GM12878 (cell line): ENCODE measurements at regions of chr20 and their contacts with region 1.

Region 1: DNA sequence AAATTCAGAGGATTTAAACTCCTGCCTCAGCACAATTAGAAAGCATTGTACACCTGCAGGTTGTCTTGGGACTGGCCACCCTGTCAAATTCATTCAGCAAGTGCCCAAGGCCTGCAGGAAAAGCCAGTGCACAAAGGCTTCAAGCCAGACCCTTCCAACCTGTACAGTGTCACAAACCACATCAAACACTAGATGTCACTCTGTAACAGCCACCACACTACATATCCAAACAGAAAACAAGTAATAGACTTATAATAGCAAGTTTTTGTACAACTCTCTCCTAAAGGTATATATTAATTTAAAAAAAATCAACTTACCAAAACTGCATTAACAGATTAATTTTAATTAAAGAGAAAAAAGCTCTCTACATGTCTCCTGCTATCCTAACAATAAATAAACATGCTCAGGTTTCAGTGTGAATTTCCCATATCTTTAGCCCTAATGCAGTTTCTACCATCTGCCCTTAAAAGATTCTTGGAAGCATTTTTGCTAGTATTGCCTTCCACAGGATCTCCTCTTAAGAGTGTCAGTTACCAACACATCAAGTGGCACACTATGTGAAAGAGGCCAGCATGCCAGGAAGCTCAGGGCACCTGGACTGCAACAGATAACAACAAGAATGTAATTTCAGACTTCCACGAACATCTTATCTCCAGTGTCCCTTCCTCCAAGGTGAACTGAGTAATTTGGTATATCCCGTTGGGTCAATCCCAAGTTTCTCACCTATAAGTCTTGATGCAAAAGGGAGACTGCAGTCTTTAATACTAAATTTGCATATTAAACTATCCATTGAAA is 47.5 kb downstream of the RALGAPA2 start:
- DNase-seq: no peak
- ATAC-seq: peak; percentile 81
- H3K4me3 ChIP-seq: no peak overlapping the region
- H3K27ac ChIP-seq: no peak overlapping the region
- H3K4me1 ChIP-seq: peaks cover 17% of the 10 kb centered on the region
- H3K27me3 ChIP-seq: no peaks in the 10 kb centered on the region
- CTCF ChIP-seq: peak; percentile 38 to 70 (median 66); a peak in 5 of 6 replicates
- EP300 ChIP-seq: no peak
- POLR2A ChIP-seq: no peak
- RAD21 ChIP-seq: peak; percentile 92

Region 2: GRCh38 chr20:20549718-20550117 is 115.3 kb before region 1 on chr20:
- CTCF ChIA-PET with region 1: no interaction called
- POLR2A ChIA-PET with region 1: no interaction called
- RAD21 ChIA-PET with region 1: no interaction called
- SMC1A ChIA-PET with region 1: no interaction called
- in situ Hi-C with region 1: no loop called
- intact Hi-C with region 1: no loop called
- DNase-seq: no peak
- ATAC-seq: no peak
- H3K4me3 ChIP-seq: no peak overlapping the region
- H3K27ac ChIP-seq: no peak overlapping the region
- H3K4me1 ChIP-seq: peaks cover 4% of the 10 kb centered on the region
- H3K27me3 ChIP-seq: no peaks in the 10 kb centered on the region
- CTCF ChIP-seq: no peak
- EP300 ChIP-seq: no peak
- POLR2A ChIP-seq: no peak
- RAD21 ChIP-seq: no peak

Region 3: GRCh38 chr20:20680991-20681508 is 16.1 kb after region 1 on chr20:
- CTCF ChIA-PET with region 1: interaction called, 10 read pairs
- POLR2A ChIA-PET with region 1: interaction called, 5 read pairs
- RAD21 ChIA-PET with region 1: interaction called, 6 read pairs
- SMC1A ChIA-PET with region 1: interaction called, 12 read pairs
- in situ Hi-C with region 1: no loop called
- intact Hi-C with region 1: no loop called
- DNase-seq: no peak
- ATAC-seq: peak; percentile 71
- H3K4me3 ChIP-seq: peak overlapping the region; percentile 21; the same call in 1 of the 2 replicates
- H3K27ac ChIP-seq: peak overlapping the region; percentile 67
- H3K4me1 ChIP-seq: peaks cover 17% of the 10 kb centered on the region
- H3K27me3 ChIP-seq: no peaks in the 10 kb centered on the region
- CTCF ChIP-seq: no peak
- EP300 ChIP-seq: no peak
- POLR2A ChIP-seq: peak; percentile 24; the same call in 1 of the 2 replicates
- RAD21 ChIP-seq: no peak

Region 4: GRCh38 chr20:20712474-20713243 is 47.7 kb after region 1 on chr20 and contains the start of gene RALGAPA2:
- CTCF ChIA-PET with region 1: interaction called, 5 read pairs
- POLR2A ChIA-PET with region 1: interaction called, 3 read pairs
- RAD21 ChIA-PET with region 1: interaction called, 5 read pairs
- SMC1A ChIA-PET with region 1: interaction called, 5 read pairs
- in situ Hi-C with region 1: no loop called
- intact Hi-C with region 1: loop called (anchors 2 kb)
- DNase-seq: peak; percentile 94
- ATAC-seq: peak; percentile 97
- H3K4me3 ChIP-seq: peak within 1 kb of the TSS; percentile 86
- H3K27ac ChIP-seq: peak within 1 kb of the TSS; percentile 66
- H3K4me1 ChIP-seq: peaks cover 6% of the 10 kb centered on the region; the same call in 1 of the 2 replicates
- H3K27me3 ChIP-seq: no peaks in the 10 kb centered on the region
- CTCF ChIP-seq: peak in 1 of 3 experiments; percentile 16; a peak in 1 of 6 replicates
- EP300 ChIP-seq: no peak
- POLR2A ChIP-seq: peak; percentile 63
- RAD21 ChIP-seq: no peak
- polyA plus RNA-seq, gene RALGAPA2: 2.9 to 4.0 TPM

Region 5: GRCh38 chr20:20734475-20734948 is 69.5 kb after region 1 on chr20:
- CTCF ChIA-PET with region 1: interaction called, 4 read pairs
- POLR2A ChIA-PET with region 1: no interaction called
- RAD21 ChIA-PET with region 1: no interaction called
- SMC1A ChIA-PET with region 1: interaction called, 11 read pairs
- in situ Hi-C with region 1: no loop called
- intact Hi-C with region 1: no loop called
- DNase-seq: peak; percentile 49
- ATAC-seq: peak; percentile 59
- H3K4me3 ChIP-seq: no peak overlapping the region
- H3K27ac ChIP-seq: peak overlapping the region; percentile 17; the same call in 1 of the 2 replicates
- H3K4me1 ChIP-seq: peaks cover 21% of the 10 kb centered on the region
- H3K27me3 ChIP-seq: no peaks in the 10 kb centered on the region
- CTCF ChIP-seq: no peak
- EP300 ChIP-seq: no peak
- POLR2A ChIP-seq: no peak
- RAD21 ChIP-seq: no peak

Region 6: GRCh38 chr20:20796766-20797440 is 131.9 kb after region 1 on chr20:
- CTCF ChIA-PET with region 1: no interaction called
- POLR2A ChIA-PET with region 1: no interaction called
- RAD21 ChIA-PET with region 1: no interaction called
- SMC1A ChIA-PET with region 1: no interaction called
- in situ Hi-C with region 1: no loop called
- intact Hi-C with region 1: no loop called
- DNase-seq: no peak
- ATAC-seq: no peak
- H3K4me3 ChIP-seq: no peak overlapping the region
- H3K27ac ChIP-seq: no peak overlapping the region
- H3K4me1 ChIP-seq: no peaks in the 10 kb centered on the region
- H3K27me3 ChIP-seq: no peaks in the 10 kb centered on the region
- CTCF ChIP-seq: no peak
- EP300 ChIP-seq: no peak
- POLR2A ChIP-seq: no peak
- RAD21 ChIP-seq: no peak

Region 7: GRCh38 chr20:21505161-21505809 is 840.3 kb after region 1 on chr20:
- CTCF ChIA-PET with region 1: no interaction called
- POLR2A ChIA-PET with region 1: no interaction called
- RAD21 ChIA-PET with region 1: no interaction called
- SMC1A ChIA-PET with region 1: no interaction called
- in situ Hi-C with region 1: no loop called
- intact Hi-C with region 1: loop called (anchors 10 kb)
- DNase-seq: no peak
- ATAC-seq: peak; percentile 70
- H3K4me3 ChIP-seq: no peak overlapping the region
- H3K27ac ChIP-seq: no peak overlapping the region
- H3K4me1 ChIP-seq: peaks cover 12% of the 10 kb centered on the region
- H3K27me3 ChIP-seq: peaks cover 13 to 22% of the 10 kb centered on the region in 2 experiments
- CTCF ChIP-seq: peak; percentile 98 to 99 (median 98); a peak in 5 of 6 replicates
- EP300 ChIP-seq: no peak
- POLR2A ChIP-seq: no peak
- RAD21 ChIP-seq: peak; percentile 98